IMR-90 (cell line): ENCODE measurements at regions of chr19 and their contacts with region 1.

Region 1: GRCh38 chr19:1825909-1826556 is 14.0 kb upstream of the ATP8B3 start:
- DNase-seq: peak; percentile 56
- ATAC-seq: peak; percentile 96
- H3K4me3 ChIP-seq: no peak overlapping the region
- H3K27ac ChIP-seq: no peak overlapping the region
- H3K4me1 ChIP-seq: peaks cover 4% of the 10 kb centered on the region; the same call in 1 of the 2 replicates
- H3K27me3 ChIP-seq: no peaks in the 10 kb centered on the region
- CTCF ChIP-seq: peak; percentile 83
- POLR2A ChIP-seq: no peak
- RAD21 ChIP-seq: peak; percentile 76

Region 2: GRCh38 chr19:1812469-1813196 is 13.4 kb before region 1 on chr19:
- CTCF ChIA-PET with region 1: no interaction called
- POLR2A ChIA-PET with region 1: no interaction called
- dilution Hi-C with region 1: no loop called
- in situ Hi-C with region 1: no loop called
- intact Hi-C with region 1: loop called (anchors 1 kb)
- DNase-seq: peak; percentile 90
- ATAC-seq: peak; percentile 91
- H3K4me3 ChIP-seq: peak overlapping the region; percentile 68
- H3K27ac ChIP-seq: peak overlapping the region; percentile 59
- H3K4me1 ChIP-seq: peaks cover 8% of the 10 kb centered on the region
- H3K27me3 ChIP-seq: no peaks in the 10 kb centered on the region
- CTCF ChIP-seq: peak; percentile 60
- POLR2A ChIP-seq: peak; percentile 41; the same call in 1 of the 2 replicates
- RAD21 ChIP-seq: peak; percentile 61

Region 3: DNA sequence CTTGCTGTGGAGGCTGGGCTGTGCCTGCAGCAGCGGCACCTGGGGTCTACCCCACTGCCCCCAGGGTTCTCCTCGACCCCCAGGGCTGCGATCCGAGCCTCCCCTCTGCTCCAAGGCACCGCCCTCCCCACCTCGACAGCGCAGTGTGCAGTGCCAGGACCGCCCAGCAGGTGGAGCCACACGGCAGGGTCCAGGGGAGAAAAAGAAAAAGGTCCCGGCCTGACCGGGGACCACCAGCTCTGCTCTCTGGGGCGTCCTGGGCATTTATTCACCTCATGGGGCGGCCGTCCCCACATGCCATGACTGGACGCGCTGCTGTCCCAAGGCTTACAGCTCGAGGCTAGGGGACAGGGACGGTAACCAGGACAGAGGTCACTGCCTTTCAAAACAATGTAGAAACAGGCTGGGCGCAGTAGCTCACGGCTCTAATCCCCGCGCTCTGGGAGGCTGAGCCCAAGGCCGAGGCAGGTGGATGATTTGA is 11.6 kb after region 1 on chr19:
- CTCF ChIA-PET with region 1: interaction called, 17 read pairs
- POLR2A ChIA-PET with region 1: no interaction called
- dilution Hi-C with region 1: no loop called
- in situ Hi-C with region 1: no loop called
- intact Hi-C with region 1: no loop called
- DNase-seq: no peak
- ATAC-seq: peak; percentile 95
- H3K4me3 ChIP-seq: no peak overlapping the region
- H3K27ac ChIP-seq: no peak overlapping the region
- H3K4me1 ChIP-seq: no peaks in the 10 kb centered on the region
- H3K27me3 ChIP-seq: no peaks in the 10 kb centered on the region
- CTCF ChIP-seq: peak; percentile 78
- POLR2A ChIP-seq: no peak
- RAD21 ChIP-seq: peak; percentile 54

Region 4: GRCh38 chr19:1864481-1865175 is 38.6 kb after region 1 on chr19:
- CTCF ChIA-PET with region 1: no interaction called
- POLR2A ChIA-PET with region 1: no interaction called
- dilution Hi-C with region 1: no loop called
- in situ Hi-C with region 1: no loop called
- intact Hi-C with region 1: no loop called
- DNase-seq: peak; percentile 38
- ATAC-seq: peak; percentile 32
- H3K4me3 ChIP-seq: peak overlapping the region; percentile 83
- H3K27ac ChIP-seq: peak overlapping the region; percentile 87
- H3K4me1 ChIP-seq: peaks cover 19% of the 10 kb centered on the region
- H3K27me3 ChIP-seq: no peaks in the 10 kb centered on the region
- CTCF ChIP-seq: peak; percentile 70
- POLR2A ChIP-seq: peak; percentile 34; the same call in 1 of the 2 replicates
- RAD21 ChIP-seq: peak; percentile 46

Region 5: DNA sequence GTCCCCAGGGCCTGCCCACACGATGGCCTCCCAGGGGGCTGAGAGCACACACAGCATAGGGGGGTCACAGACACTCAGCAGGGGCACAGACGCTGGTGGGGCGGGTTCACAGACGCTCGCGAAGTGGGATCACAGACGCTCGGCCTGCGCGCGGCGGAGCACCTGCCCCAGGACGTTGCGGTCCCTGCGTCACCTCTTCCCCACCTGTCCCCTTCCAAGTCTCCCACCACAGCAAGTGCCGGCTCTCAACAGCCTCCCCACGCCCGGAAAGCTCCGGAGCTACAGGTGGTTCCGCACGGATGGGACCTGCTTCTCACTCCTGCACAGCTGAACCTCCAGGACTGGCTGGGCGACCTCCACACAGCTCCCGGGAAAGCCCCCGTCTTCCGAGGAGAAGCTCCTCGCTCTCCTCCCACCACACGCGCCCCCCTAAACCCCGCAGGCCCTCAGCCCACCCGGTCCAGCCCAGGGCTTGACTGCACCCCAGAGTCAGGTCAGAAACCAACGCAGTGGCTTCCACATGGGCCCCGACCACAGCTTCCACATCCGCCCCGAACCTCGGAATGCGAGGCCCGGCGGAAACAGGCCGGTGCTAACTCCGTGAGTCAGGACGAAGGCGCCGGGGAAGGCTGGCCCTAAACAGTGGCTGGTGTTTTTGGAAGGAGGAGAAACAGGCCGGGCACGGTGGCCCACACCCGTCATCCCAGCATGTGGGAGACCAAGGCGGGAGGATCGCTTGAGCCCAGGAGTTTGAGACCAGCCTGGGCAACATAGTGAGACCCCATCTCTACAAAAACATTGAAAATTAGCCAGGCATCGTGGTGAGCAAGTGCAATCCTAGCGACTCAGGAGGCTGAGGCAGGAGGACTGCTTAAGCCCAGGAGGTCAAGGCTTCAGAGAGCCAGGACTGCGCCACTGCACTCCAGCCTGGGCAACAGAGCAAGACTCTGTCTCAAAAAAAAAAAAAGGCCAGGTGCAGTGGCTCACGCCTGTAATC is 173.0 kb after region 1 on chr19:
- CTCF ChIA-PET with region 1: no interaction called
- POLR2A ChIA-PET with region 1: no interaction called
- dilution Hi-C with region 1: no loop called
- in situ Hi-C with region 1: no loop called
- intact Hi-C with region 1: no loop called
- DNase-seq: no peak
- ATAC-seq: no peak
- H3K4me3 ChIP-seq: no peak overlapping the region
- H3K27ac ChIP-seq: no peak overlapping the region
- H3K4me1 ChIP-seq: no peaks in the 10 kb centered on the region
- H3K27me3 ChIP-seq: no peaks in the 10 kb centered on the region
- CTCF ChIP-seq: no peak
- POLR2A ChIP-seq: no peak
- RAD21 ChIP-seq: no peak